H1 (cell line): ENCODE measurements at regions of chr11 and their contacts with region 1.

Region 1: DNA sequence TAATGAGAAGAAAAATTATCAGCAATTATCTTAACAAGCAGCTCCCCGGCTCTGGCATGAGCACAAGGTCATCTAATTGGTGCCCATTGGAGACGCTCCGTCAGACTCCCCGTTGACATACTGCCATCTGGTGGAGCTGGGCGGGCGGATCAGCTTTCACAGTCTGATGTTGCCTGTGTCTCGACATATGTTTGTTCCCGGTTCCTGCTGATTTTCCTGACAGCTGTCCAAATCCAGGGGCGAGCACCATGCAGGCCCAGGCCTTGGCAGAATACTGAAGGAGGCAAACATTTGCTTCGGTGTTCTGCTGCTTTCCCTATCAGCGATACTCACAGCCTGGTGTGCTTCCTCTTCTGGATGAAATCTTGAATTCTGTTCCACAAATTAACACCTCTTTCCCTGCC is 43.8 kb upstream of the BARX2 start:
- DNase-seq: peak; percentile 64 to 89
- H3K4me3 ChIP-seq: no peak overlapping the region
- H3K27ac ChIP-seq: no peak overlapping the region
- H3K4me1 ChIP-seq: peaks cover 0 to 1% (median 0%) of the 10 kb centered on the region in 4 experiments; a peak in 1 of 7 replicates
- H3K27me3 ChIP-seq: no peaks in the 10 kb centered on the region
- CTCF ChIP-seq: peak; percentile 93 to 95 (median 94)
- EP300 ChIP-seq: no peak
- POLR2A ChIP-seq: no peak
- RAD21 ChIP-seq: peak; percentile 99 to 100

Region 2: DNA sequence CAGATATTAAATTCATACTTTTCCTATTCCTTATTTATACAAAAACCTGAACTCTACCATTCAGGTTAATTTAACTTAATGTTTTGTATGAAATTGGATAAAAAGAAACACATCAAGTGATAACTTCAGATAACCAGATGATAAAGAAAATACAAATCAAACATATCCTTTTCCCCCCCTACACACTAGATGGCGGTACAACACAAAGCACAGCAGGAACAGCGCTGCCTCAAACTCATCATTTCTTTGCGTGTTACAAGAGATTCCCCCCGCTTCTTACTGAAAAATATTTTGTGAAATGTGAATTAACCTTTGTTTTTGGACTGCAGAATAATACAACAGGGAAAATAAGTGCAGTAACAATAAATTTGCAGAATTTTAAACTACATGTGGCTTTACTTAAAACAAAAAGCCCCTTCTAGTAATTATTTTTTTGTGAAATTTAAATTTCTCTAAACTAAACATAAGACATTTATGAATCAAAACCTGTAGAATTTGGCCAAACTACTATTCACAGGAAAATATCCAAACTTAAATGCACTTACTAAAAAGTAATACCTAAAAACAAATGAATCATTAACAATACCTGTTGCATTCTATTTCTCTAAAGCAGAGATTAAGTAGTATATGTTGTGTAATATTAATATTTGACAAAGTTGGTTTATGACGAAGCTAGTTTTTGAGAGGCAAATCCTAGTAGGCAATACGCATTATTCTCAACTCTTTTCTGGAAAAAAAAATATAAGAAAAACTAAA is 214.1 kb before region 1 on chr11:
- CTCF ChIA-PET with region 1: interaction called, 42 read pairs
- POLR2A ChIA-PET with region 1: no interaction called
- DNase-seq: no peak
- H3K4me3 ChIP-seq: no peak overlapping the region
- H3K27ac ChIP-seq: no peak overlapping the region
- H3K4me1 ChIP-seq: no peaks in the 10 kb centered on the region
- H3K27me3 ChIP-seq: no peaks in the 10 kb centered on the region
- CTCF ChIP-seq: peak; percentile 34 to 84 (median 78)
- EP300 ChIP-seq: no peak
- POLR2A ChIP-seq: no peak
- RAD21 ChIP-seq: peak; percentile 97 to 99

Region 3: GRCh38 chr11:129163714-129164164 is 168.1 kb before region 1 on chr11:
- CTCF ChIA-PET with region 1: no interaction called
- POLR2A ChIA-PET with region 1: no interaction called
- DNase-seq: no peak
- H3K4me3 ChIP-seq: no peak overlapping the region
- H3K27ac ChIP-seq: no peak overlapping the region
- H3K4me1 ChIP-seq: no peaks in the 10 kb centered on the region
- H3K27me3 ChIP-seq: no peaks in the 10 kb centered on the region
- CTCF ChIP-seq: no peak
- EP300 ChIP-seq: no peak
- POLR2A ChIP-seq: no peak
- RAD21 ChIP-seq: no peak

Region 4: DNA sequence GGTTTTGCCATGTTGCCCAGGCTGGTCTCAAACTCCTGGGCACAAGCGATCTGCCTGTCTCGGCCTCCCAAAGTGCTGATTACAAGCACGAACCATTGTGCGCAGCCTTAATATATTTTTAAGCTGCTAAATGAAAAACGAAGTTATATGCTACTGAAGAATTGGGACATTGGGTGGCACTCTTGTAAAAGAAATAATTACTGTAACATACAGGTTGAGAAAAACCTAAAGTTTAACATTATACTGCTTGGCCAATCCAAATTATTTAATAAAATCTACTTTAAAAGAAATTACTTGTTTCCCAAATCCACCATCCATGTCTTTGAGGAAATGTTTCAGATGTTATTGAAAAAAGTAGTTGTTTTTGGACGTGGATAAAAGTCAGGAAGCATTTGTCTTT is 101.9 kb before region 1 on chr11:
- CTCF ChIA-PET with region 1: interaction called, 14 read pairs
- POLR2A ChIA-PET with region 1: no interaction called
- DNase-seq: no peak
- H3K4me3 ChIP-seq: no peak overlapping the region
- H3K27ac ChIP-seq: no peak overlapping the region
- H3K4me1 ChIP-seq: no peaks in the 10 kb centered on the region
- H3K27me3 ChIP-seq: no peaks in the 10 kb centered on the region
- CTCF ChIP-seq: no peak
- EP300 ChIP-seq: no peak
- POLR2A ChIP-seq: no peak
- RAD21 ChIP-seq: peak; percentile 22 to 23; a peak in 2 of 4 replicates

Region 5: DNA sequence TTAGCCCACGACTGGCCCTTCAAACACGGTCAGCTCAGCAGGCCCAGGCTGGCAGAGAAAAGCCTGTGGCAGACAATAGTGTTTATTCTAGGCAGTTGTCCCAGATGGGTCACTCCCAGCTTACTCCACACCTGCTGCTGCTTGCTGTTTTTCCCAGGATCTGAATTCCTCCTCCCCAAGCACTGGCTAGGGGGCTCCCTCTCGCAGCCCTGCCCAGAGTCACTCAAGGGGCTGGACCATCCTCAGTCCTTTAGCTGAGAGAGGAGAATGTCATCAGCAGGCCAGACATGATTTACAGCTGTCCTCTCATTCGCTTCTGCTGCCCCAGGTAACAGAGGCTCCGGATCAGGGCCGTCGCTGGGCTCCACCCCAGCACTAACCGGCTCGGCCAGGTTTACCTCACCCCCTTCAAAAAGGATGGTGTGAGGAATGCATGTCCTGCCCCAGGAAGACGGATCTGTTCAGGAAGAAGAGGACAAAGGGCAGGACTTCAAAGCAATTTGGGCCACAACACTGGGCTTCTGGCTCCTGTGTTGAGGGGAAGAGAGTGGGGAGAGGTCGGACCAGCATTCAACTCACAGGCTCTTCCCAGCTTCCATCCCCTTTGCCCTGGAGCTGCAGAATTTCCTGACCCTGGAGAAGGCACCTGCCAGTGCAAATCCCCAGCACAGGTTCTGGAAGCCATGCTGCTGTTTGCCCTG is 15.9 kb before region 1 on chr11:
- CTCF ChIA-PET with region 1: interaction called, 88 read pairs
- POLR2A ChIA-PET with region 1: no interaction called
- DNase-seq: peak in 1 of 2 experiments; percentile 54
- H3K4me3 ChIP-seq: no peak overlapping the region
- H3K27ac ChIP-seq: no peak overlapping the region
- H3K4me1 ChIP-seq: peaks cover 0 to 19% (median 12%) of the 10 kb centered on the region in 4 experiments; a peak in 6 of 7 replicates
- H3K27me3 ChIP-seq: no peaks in the 10 kb centered on the region
- CTCF ChIP-seq: peak in 1 of 3 experiments; percentile 14; a peak in 1 of 4 replicates
- EP300 ChIP-seq: no peak
- POLR2A ChIP-seq: no peak
- RAD21 ChIP-seq: no peak

Region 6: GRCh38 chr11:129348813-129349212 is 16.9 kb after region 1 on chr11:
- CTCF ChIA-PET with region 1: interaction called, 10 read pairs
- POLR2A ChIA-PET with region 1: no interaction called
- DNase-seq: no peak
- H3K4me3 ChIP-seq: no peak overlapping the region
- H3K27ac ChIP-seq: no peak overlapping the region
- H3K4me1 ChIP-seq: no peaks in the 10 kb centered on the region
- H3K27me3 ChIP-seq: no peaks in the 10 kb centered on the region
- CTCF ChIP-seq: no peak
- EP300 ChIP-seq: no peak
- POLR2A ChIP-seq: no peak
- RAD21 ChIP-seq: no peak

Region 7: DNA sequence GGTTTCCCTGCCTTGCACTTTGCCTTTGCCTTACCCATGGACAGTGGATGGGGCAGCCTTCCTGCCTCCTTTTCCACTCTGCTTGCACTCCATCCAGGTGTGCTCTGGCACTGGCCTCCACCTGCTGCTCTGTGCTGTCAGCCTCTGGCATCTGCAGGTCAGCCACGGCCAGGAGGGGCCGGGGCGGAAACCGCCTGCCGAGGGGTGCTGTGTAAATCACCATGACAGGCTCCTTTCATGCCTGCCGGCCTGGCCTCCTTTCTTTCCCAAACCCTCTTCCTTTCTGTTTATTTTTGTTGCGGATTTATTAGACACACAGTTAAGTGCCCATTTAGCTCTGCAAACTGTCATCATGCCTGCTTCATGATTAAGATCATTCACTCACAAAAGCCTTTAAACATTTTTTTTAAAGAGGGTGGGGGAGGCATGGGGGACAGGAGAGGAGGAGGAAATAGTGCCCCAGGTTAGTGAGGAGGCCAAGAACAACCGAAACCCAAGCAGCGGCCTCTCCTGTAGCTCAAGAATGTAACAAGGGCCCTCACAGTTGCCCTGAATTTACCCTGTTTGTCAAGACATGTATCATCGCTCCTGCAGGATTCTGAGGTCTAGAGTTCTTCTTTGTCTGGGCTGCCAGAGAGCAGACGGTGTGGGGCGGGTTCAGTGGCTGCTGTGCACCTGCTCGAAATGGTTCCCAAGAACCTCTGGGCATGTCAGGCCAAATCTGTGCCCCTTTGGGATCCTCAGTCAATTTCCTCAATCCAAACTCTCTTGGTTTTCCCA is 127.1 kb after region 1 on chr11:
- CTCF ChIA-PET with region 1: no interaction called
- POLR2A ChIA-PET with region 1: no interaction called
- DNase-seq: no peak
- H3K4me3 ChIP-seq: no peak overlapping the region
- H3K27ac ChIP-seq: no peak overlapping the region
- H3K4me1 ChIP-seq: peaks cover 2 to 6% (median 4%) of the 10 kb centered on the region in 4 experiments; a peak in 6 of 7 replicates
- H3K27me3 ChIP-seq: no peaks in the 10 kb centered on the region
- CTCF ChIP-seq: no peak
- EP300 ChIP-seq: no peak
- POLR2A ChIP-seq: no peak
- RAD21 ChIP-seq: no peak